Breast epithelium (tissue), 4 donors: ENCODE measurements at regions of chr6 and their contacts with region 1.

Region 1: DNA sequence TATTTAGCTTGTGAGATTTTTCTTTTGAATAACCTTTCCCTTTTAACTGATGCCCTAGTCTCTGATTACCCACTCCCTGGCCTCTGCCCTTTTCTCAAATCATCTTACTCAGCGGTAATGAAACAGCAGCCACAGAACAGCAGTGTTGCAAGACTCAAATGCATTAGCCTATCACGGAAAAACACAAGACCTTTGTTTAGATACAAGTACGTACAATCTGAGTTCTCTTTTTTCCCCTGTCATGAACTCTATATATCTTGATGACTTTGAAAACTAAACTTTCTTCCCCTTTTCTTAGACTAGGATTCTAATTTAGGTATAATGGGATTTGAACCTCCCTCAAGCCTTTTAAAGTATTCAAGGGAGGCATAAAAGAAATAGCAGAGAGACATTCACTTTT is 1034.9 kb downstream of the EYS start:
- DNase-seq: no peak
- H3K4me3 ChIP-seq: no peak overlapping the region
- H3K27ac ChIP-seq: no peak overlapping the region
- H3K4me1 ChIP-seq: no peaks in the 10 kb centered on the region
- H3K27me3 ChIP-seq: no peaks in the 10 kb centered on the region
- CTCF ChIP-seq: no peak
- POLR2A ChIP-seq: no peak

Region 2: DNA sequence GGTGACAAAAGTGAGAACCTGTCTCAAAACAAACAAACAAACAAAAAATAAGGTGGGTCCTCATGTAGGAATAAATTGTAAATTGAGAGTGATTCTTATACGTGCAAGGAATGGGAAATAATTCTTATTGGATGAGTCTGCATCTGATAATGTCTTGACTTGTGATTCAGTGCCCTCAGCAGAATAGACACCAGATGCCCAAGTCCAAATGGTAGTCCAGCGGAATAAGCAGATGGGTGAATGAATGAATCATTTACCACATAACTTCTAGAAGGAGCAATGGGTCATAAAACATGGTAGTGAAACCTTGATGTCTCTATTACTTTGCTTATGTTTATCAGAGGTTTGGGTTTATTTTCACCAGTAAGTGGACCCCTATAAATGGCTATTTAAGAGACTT is 288.9 kb before region 1 on chr6:
- intact Hi-C with region 1: no loop called
- DNase-seq: no peak
- H3K4me3 ChIP-seq: no peak overlapping the region
- H3K27ac ChIP-seq: no peak overlapping the region
- H3K4me1 ChIP-seq: no peaks in the 10 kb centered on the region
- H3K27me3 ChIP-seq: no peaks in the 10 kb centered on the region
- CTCF ChIP-seq: no peak
- POLR2A ChIP-seq: no peak

Region 3: GRCh38 chr6:64644024-64644423 is 28.1 kb before region 1 on chr6:
- intact Hi-C with region 1: no loop called
- DNase-seq: no peak
- H3K4me3 ChIP-seq: no peak overlapping the region
- H3K27ac ChIP-seq: no peak overlapping the region
- H3K4me1 ChIP-seq: no peaks in the 10 kb centered on the region
- H3K27me3 ChIP-seq: no peaks in the 10 kb centered on the region
- CTCF ChIP-seq: no peak
- POLR2A ChIP-seq: no peak

Region 4: DNA sequence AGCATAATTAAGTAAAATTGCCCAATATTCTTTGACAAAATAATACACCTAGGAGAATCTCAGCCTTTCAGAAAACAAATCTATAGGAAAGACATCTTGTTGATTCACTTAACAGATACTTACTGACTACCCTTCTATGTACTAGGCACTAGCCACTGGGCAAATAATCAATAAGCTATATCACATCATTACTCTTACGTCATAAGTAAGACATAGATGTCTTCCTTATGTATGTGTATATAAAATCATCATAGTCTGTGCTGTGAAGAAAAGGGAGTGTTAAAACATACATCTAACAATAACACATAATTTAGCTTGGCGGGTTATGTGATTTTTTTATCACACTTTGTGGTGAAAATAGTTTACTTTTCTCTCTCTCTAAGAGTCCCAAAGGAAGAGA is 301.0 kb after region 1 on chr6:
- intact Hi-C with region 1: loop called (anchors 5 kb)
- DNase-seq: no peak
- H3K4me3 ChIP-seq: no peak overlapping the region
- H3K27ac ChIP-seq: no peak overlapping the region
- H3K4me1 ChIP-seq: no peaks in the 10 kb centered on the region
- H3K27me3 ChIP-seq: no peaks in the 10 kb centered on the region
- CTCF ChIP-seq: no peak
- POLR2A ChIP-seq: no peak